PC-9 (cell line): ENCODE measurements at regions of chr1 and their contacts with region 1.

Region 1: DNA sequence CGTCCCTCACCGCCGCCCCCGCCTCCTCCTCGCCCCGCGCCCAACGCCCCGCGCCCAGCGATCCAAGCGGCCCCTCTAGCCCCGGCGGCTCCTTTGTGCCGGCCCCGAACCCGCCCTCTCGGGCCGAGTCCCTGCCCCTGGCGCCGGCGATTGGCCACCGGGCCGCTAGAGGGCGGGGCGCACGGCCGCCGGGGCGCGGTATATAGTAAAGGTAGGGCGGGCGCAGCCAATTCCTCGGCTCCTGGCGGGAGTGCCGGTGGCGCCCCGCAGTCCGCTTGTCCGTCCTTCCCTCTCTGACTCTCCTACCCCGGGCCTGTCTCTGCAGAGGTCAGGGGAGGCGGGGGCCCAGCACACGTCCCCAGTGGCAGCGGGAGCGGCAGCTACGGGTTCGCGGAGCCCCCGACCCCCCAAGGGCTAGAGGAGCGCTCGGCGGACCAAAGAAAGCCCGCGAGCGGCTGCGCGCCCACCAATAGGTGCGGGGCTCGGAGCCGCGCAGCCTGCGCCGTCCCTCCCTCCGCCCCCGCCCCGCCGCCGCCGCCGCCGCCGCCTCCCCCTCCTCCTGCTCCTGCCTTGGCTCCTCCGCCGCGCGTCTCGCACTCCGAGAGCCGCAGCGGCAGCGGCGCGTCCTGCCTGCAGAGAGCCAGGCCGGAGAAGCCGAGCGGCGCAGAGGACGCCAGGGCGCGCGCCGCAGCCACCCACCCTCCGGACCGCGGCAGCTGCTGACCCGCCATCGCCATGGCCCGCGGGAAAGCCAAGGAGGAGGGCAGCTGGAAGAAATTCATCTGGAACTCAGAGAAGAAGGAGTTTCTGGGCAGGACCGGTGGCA is at the start of gene ATP1B1:
- DNase-seq: peak; percentile 74 to 95
- H3K4me3 ChIP-seq: peak within 1 kb of the TSS; percentile 99
- H3K27ac ChIP-seq: peak within 1 kb of the TSS; percentile 83
- H3K4me1 ChIP-seq: peaks cover 48% of the 10 kb centered on the region
- H3K27me3 ChIP-seq: no peaks in the 10 kb centered on the region
- CTCF ChIP-seq: peak; percentile 72
- total RNA-seq, gene ATP1B1: 110 and 113 TPM in 2 replicates

Region 2: GRCh38 chr1:168301664-168302334 is 804.5 kb before region 1 on chr1:
- CTCF ChIA-PET with region 1: no interaction called
- POLR2A ChIA-PET with region 1: interaction called, 3 read pairs
- intact Hi-C with region 1: loop called (anchors 5 kb)
- DNase-seq: peak; percentile 88 to 98
- H3K4me3 ChIP-seq: no peak overlapping the region
- H3K27ac ChIP-seq: peak overlapping the region; percentile 81
- H3K4me1 ChIP-seq: peaks cover 40% of the 10 kb centered on the region
- H3K27me3 ChIP-seq: no peaks in the 10 kb centered on the region
- CTCF ChIP-seq: no peak

Region 3: DNA sequence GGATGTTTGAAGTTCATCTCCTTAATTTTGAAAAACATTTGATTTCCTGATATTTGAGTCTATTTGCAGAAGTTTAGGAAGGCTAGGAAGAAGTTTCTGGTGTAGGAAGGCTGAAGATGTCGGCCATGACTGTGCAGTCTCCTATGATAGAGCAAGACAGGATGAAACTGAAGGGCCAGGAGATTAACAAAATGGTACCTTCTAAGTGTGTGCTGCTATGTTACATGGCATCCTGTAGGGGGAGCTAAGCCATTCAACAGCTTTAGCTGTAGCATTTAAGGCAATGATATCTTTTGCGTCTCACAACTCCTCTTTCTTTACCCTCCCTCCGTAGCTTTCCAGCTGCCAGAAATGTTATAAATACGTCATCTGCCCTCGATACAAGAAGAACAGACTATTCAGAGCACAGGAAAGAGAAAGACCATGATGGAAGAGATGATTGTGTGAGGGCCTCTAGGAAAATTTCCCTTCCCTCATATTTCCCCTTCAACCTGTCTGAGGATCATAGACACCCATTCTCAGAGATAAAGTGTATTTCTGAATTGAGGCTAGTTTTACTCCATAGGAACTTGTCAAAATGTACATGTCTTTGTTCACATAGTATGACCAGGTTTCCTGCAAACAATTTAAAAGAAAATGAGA is 468.8 kb before region 1 on chr1:
- CTCF ChIA-PET with region 1: interaction called, 4 read pairs
- POLR2A ChIA-PET with region 1: interaction called, 13 read pairs
- intact Hi-C with region 1: no loop called
- DNase-seq: no peak
- H3K4me3 ChIP-seq: no peak overlapping the region
- H3K27ac ChIP-seq: peak overlapping the region; percentile 63
- H3K4me1 ChIP-seq: peaks cover 17% of the 10 kb centered on the region
- H3K27me3 ChIP-seq: no peaks in the 10 kb centered on the region
- CTCF ChIP-seq: peak; percentile 68

Region 4: GRCh38 chr1:168907053-168907452 is 199.3 kb before region 1 on chr1:
- CTCF ChIA-PET with region 1: interaction called, 3 read pairs
- POLR2A ChIA-PET with region 1: no interaction called
- intact Hi-C with region 1: loop called (anchors 5 kb)
- DNase-seq: peak; percentile 52 to 97
- H3K4me3 ChIP-seq: peak overlapping the region; percentile 27; the same call in 1 of the 2 replicates
- H3K27ac ChIP-seq: peak overlapping the region; percentile 91
- H3K4me1 ChIP-seq: peaks cover 37% of the 10 kb centered on the region
- H3K27me3 ChIP-seq: no peaks in the 10 kb centered on the region
- CTCF ChIP-seq: no peak

Region 5: GRCh38 chr1:169060906-169061639 is 45.2 kb before region 1 on chr1:
- CTCF ChIA-PET with region 1: no interaction called
- POLR2A ChIA-PET with region 1: interaction called, 16 read pairs
- intact Hi-C with region 1: loop called (anchors 1 kb)
- DNase-seq: peak in 1 of 2 experiments; percentile 81
- H3K4me3 ChIP-seq: peak overlapping the region; percentile 27; the same call in 1 of the 2 replicates
- H3K27ac ChIP-seq: peak overlapping the region; percentile 92
- H3K4me1 ChIP-seq: peaks cover 49% of the 10 kb centered on the region
- H3K27me3 ChIP-seq: no peaks in the 10 kb centered on the region
- CTCF ChIP-seq: no peak